ENCODE measurements at regions of chr9 and their contacts with region 1.

Region 1: GRCh38 chr9:19174127-19174912 is 47.0 kb upstream of the PLIN2 start:
- H3K4me3 ChIP-seq: no peak overlapping the region
- H3K27ac ChIP-seq: no peak overlapping the region
- H3K4me1 ChIP-seq: no peaks in the 10 kb centered on the region
- CTCF ChIP-seq: peak; percentile 64; the same call in 1 of the 2 replicates

Region 2: GRCh38 chr9:19162956-19163355 is 11.4 kb before region 1 on chr9:
- CTCF ChIA-PET with region 1: interaction called, 11 read pairs
- POLR2A ChIA-PET with region 1: no interaction called
- H3K4me3 ChIP-seq: no peak overlapping the region
- H3K27ac ChIP-seq: no peak overlapping the region
- H3K4me1 ChIP-seq: no peaks in the 10 kb centered on the region
- CTCF ChIP-seq: no peak

Region 3: DNA sequence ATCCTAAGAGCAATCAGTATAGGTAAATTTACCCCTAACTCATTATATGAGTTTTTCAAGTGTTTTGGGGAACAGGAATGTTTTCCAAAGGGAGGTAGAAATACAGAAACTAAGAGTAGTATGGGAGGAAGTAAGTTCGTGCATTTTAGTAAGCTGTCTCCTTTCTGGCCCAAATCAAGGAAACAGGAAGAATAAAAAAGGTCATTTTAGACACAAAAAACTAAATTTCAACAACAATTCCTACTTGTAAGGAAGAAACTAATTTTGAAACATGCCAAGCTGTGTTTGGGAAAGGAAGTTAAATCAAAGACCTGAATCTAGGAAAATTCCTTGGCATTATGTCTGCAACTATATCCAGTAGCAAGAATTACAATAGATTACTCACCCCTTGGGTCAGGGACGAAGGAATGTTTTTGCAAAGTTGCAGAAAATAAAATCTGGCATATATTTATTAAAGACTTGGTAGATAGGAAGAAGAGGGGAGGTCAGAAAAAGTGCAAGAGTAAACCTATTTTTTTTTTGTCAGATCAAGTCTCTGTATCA is 212.3 kb after region 1 on chr9:
- CTCF ChIA-PET with region 1: no interaction called
- POLR2A ChIA-PET with region 1: no interaction called
- H3K4me3 ChIP-seq: no peak overlapping the region
- H3K27ac ChIP-seq: no peak overlapping the region
- H3K4me1 ChIP-seq: no peaks in the 10 kb centered on the region
- CTCF ChIP-seq: no peak

Region 4: DNA sequence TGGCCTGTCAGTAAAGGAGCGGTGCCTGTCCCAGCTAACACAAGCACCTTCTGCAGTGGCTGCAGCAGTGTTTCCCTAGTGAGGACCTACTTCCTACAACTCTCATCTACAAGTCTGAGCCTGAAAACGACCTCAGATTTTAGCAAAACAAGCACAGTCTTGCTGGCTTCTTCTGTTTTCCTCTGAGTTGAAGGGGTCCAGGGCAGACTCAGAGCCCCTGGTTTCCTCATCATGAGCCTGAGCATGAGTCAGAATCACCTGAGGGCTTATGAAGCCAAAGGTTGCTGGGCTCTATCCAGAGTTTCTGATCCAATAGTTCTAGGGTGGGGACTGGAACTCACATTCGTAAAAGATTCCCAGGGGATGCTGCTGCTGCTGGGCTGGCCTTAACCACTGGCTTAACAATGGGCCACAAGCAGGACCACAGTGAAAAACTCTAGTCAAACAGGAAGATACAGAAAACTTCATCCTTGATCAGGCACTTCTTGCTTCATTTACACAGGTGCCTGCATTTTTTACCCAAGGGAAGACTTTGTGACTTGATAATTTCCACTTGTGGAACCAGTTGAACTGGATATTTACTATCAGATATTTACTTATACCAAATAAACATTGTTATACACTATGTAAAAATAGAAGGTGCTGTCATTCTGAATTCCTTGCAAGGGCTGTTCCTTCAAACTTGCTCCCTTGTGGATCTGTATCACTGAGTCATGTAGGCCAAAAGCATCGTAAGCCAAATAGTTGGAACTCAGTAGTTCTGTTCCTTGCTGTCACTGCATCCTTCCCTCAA is 230.2 kb after region 1 on chr9:
- CTCF ChIA-PET with region 1: no interaction called
- POLR2A ChIA-PET with region 1: no interaction called
- H3K4me3 ChIP-seq: no peak overlapping the region
- H3K27ac ChIP-seq: no peak overlapping the region
- H3K4me1 ChIP-seq: no peaks in the 10 kb centered on the region; the same call in 1 of the 2 replicates
- CTCF ChIP-seq: no peak

Region 5: DNA sequence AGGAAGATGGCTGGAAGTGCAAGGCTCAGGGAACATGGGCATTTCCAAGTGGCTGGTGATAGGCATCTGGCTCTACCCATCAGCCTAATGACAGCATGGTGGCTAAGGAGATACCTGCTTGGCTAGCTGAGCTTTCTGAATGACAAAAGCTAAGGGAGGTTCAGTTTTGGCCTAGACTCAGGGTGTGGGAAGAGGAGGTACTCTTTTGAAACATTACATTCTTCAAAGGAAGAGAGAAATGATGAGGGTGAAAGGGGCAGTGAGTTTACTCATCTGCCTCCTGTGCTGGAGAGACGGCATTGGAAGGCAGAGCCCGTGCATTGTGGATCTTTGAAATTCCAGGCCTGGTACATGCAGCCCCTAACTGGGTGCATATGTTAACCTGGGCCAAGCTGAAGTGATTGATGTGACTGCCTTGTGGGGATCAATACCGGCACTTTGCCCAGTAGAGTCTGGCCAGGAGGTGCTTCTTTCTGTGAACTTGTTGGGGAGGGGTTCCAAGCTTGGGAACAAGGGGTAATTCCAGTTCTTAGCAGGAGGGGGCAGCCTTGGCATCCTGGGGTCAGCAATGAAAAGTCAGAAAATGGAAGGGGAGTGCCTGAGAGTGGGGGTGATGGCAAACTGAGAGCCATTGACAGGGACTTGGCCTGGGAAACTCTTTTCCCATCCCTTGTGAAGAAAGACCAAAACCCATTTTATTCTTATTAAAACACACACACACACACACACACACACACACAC is 343.1 kb after region 1 on chr9:
- CTCF ChIA-PET with region 1: no interaction called
- POLR2A ChIA-PET with region 1: no interaction called
- H3K4me3 ChIP-seq: no peak overlapping the region
- H3K27ac ChIP-seq: no peak overlapping the region
- H3K4me1 ChIP-seq: no peaks in the 10 kb centered on the region
- CTCF ChIP-seq: 0 out of 2 replicates have a peak, but pooled peaks have one; percentile 11